ENCODE measurements at regions of chr5 and their contacts with region 1.

Region 1: GRCh38 chr5:106474066-106474465 is 1196.7 kb downstream of the EFNA5 start:
- DNase-seq: no peak
- ATAC-seq: no peak
- H3K4me3 ChIP-seq: no peak overlapping the region
- H3K27ac ChIP-seq: no peak overlapping the region
- H3K4me1 ChIP-seq: no peaks in the 10 kb centered on the region
- H3K27me3 ChIP-seq: no peaks in the 10 kb centered on the region
- CTCF ChIP-seq: no peak
- POLR2A ChIP-seq: no peak
- RAD21 ChIP-seq: no peak

Region 2: DNA sequence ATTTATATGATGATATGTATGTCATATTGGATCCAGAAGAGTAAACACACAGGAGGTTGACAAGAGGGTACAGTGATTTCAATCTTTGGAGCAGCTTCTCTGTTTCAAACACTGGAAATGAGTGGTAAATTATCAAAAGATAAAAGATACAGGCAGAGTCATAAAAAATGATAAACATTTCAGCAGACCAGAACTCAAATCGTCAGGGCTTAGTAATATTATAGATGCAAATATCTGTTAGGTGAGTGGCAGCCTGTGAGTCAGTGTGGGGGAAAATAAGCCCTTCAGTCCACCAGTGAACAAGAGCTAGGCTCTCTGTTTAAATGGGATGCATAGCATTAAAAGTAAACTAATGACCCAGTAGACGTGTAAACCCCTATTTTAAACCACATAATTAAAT is 181.4 kb before region 1 on chr5:
- CTCF ChIA-PET with region 1: no interaction called
- POLR2A ChIA-PET with region 1: no interaction called
- dilution Hi-C with region 1: no loop called
- in situ Hi-C with region 1: no loop called
- intact Hi-C with region 1: loop called (anchors 10 kb)
- DNase-seq: peak; percentile 84
- ATAC-seq: peak; percentile 77
- H3K4me3 ChIP-seq: no peak overlapping the region
- H3K27ac ChIP-seq: no peak overlapping the region
- H3K4me1 ChIP-seq: no peaks in the 10 kb centered on the region
- H3K27me3 ChIP-seq: no peaks in the 10 kb centered on the region
- CTCF ChIP-seq: no peak
- POLR2A ChIP-seq: no peak
- RAD21 ChIP-seq: no peak

Region 3: DNA sequence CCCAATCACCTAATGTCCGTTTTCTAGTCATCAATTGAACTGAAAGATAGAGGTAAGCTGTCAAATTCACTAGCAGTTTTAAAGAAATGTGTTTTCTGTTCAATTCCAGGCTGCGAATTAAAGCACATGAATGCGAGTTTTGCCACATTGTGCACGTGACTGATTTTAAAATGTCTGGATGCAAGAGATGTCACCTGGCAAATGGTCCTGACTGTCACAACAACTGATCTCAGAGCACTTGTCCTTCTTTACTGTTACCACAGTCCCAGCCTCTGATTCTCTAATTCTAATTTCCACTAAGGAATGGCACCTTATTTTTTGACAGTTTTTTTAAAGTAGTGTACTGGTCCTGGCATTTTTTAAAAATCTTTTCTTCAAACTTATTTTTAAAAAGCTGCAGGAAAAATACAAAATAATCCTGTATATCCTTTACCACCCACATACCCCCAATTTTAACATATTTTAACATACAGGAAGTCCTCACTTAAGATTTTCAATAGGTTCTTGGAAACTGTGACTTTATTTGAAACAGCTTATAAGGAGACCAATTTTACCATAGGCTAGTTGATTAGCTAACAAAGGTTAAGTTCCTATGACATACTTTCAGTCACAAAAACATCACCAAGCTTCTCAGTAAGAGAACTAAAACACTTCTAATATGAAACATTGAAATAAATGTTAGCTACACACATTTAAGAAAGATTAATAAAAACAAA is 167.6 kb before region 1 on chr5:
- CTCF ChIA-PET with region 1: no interaction called
- POLR2A ChIA-PET with region 1: no interaction called
- dilution Hi-C with region 1: no loop called
- in situ Hi-C with region 1: no loop called
- intact Hi-C with region 1: no loop called
- DNase-seq: no peak
- ATAC-seq: no peak
- H3K4me3 ChIP-seq: no peak overlapping the region
- H3K27ac ChIP-seq: no peak overlapping the region
- H3K4me1 ChIP-seq: no peaks in the 10 kb centered on the region
- H3K27me3 ChIP-seq: no peaks in the 10 kb centered on the region
- CTCF ChIP-seq: no peak
- POLR2A ChIP-seq: no peak
- RAD21 ChIP-seq: no peak

Region 4: GRCh38 chr5:106376522-106376921 is 97.5 kb before region 1 on chr5:
- CTCF ChIA-PET with region 1: no interaction called
- POLR2A ChIA-PET with region 1: no interaction called
- dilution Hi-C with region 1: no loop called
- in situ Hi-C with region 1: no loop called
- intact Hi-C with region 1: no loop called
- DNase-seq: peak; percentile 12
- ATAC-seq: no peak
- H3K4me3 ChIP-seq: no peak overlapping the region
- H3K27ac ChIP-seq: no peak overlapping the region
- H3K4me1 ChIP-seq: no peaks in the 10 kb centered on the region
- H3K27me3 ChIP-seq: no peaks in the 10 kb centered on the region
- CTCF ChIP-seq: no peak
- POLR2A ChIP-seq: no peak
- RAD21 ChIP-seq: no peak

Measured in IMR-90 (cell line).